ENCODE measurements at regions of chr20 and their contacts with region 1.

Region 1: GRCh38 chr20:2523919-2524708 is 12.3 kb upstream of the TMC2 start:
- DNase-seq: peak; percentile 38
- H3K4me3 ChIP-seq: peak overlapping the region; percentile 79
- H3K27ac ChIP-seq: peak overlapping the region; percentile 90
- H3K27me3 ChIP-seq: no peaks in the 10 kb centered on the region
- CTCF ChIP-seq: peak; percentile 95

Region 2: DNA sequence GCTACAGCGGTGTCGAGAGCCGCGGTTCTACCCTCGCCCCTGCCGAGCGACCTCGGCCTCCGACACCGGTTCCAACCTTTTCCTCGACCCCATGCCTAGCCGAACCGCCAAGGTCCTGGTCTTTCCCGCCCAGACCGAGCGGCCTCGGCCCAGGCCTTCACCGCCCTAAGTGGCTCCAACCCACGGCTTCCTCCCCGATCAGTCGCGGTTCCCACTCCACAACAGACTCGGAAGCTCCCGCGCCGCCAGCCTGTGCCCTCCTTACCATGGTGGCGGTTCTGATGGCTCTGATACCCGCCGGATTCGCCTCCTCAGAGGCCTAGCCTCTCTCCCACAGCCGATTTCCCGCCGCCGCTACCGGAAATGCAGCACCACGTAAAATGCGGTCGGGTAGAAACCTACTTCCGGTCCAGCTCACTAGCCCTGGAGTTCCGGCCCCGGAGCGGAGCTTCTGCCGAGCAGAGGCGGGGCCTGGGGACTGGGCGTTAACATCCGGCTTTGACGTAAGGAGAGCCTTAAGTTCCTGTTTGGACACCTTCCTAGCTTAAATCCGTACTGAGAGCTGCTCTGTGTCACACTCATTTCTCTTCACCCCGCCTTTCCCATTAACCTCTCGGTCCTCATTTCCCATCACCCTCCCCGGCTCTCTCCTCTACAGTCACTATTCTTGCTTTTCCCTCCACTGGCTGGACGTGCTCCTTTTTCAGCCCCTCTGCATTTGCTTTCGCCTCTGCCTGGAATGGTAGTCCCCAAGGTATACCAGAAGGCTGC is 53.5 kb before region 1 on chr20 and contains the start of gene SNRPB:
- CTCF ChIA-PET with region 1: interaction called, 22 read pairs
- POLR2A ChIA-PET with region 1: interaction called, 10 read pairs
- DNase-seq: peak; percentile 97
- H3K4me3 ChIP-seq: peak within 1 kb of the TSS; percentile 94
- H3K27ac ChIP-seq: peak within 1 kb of the TSS; percentile 96
- H3K27me3 ChIP-seq: no peaks in the 10 kb centered on the region
- CTCF ChIP-seq: no peak
- polyA plus RNA-seq, gene SNRPB: 137 and 142 TPM in 2 replicates

Region 3: DNA sequence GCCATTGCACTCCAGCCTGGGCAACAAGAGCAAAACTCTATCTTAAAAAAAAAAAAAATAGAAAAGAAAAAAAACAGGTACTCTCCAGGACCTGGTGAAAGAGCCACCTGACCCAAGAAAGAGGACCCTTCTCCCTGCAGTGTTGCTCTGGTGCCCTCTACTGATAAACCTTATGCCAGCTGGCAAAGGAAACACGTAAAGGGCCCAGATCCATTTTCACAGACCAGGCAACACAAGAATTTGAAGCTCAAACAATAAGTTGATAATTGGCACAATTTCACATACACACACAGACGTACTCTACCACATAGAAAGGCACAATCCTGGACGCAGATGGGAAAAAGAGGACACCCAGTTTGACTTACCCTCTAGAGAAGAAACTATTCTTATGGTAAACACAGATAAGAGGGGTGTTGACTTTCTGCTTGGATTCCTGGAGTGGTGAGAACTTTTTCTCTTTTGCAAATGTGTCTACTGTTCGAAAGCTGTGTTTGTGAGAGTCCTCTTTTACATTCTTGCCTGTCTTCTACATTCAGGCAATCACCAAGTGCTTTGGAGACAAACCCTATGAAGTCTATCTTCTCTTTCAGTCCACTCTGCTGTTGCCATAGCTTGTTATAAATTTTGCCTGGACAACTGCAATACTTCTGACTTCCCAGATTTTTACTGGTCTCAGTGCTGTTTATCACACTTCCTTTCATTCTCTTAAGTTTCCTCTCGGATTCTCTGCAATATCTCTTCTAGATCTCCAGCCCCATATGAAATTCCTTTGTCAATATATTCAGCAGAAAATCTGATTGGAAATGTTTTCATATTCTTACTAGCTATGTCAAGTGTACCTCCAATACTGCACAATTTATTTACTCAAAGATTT is 47.1 kb before region 1 on chr20:
- CTCF ChIA-PET with region 1: interaction called, 17 read pairs
- POLR2A ChIA-PET with region 1: interaction called, 10 read pairs
- DNase-seq: no peak
- H3K4me3 ChIP-seq: no peak overlapping the region
- H3K27ac ChIP-seq: no peak overlapping the region
- H3K27me3 ChIP-seq: no peaks in the 10 kb centered on the region
- CTCF ChIP-seq: 0 out of 2 replicates have a peak, but pooled peaks have one; percentile 10

Region 4: DNA sequence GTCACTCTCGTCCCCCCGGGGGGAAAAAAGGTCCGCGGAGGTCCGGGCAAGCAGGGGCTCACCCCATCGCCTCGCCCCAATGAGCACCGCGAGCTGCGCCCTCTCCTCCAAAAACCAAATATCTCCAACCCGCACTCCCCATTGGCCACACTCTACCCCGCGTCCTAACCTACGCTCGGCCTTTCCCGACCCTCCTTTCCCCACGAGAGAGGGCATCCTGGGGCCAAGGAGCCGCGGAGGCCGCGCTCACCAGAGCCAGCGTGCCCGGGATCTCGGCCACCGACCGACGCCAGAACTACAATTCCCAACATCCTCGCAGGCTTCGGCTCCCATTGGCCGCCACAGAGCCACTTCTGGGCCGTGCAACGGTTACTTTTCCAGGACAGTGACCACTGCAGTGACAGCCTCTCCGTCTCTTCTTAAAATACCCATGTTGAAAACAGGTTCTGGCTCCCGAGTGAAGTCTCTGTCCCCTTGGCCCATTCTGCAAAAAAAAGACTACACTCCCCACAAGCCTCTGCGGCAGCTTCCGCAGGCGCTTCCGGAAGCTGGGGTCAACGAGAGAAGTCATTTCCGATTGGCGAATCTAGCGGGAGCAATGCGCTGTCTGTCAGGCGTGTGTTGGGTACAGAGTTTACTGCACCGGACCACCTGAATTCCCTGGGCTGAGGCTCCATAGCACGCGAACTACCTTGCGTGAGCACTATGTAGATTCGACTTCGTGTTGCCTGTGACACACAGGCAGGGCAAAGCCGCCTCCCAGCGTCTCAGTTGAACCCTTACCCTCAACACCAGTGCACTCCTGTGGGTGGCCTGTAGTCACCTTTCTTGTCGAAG is 15.3 kb before region 1 on chr20 and contains the start of gene ZNF343:
- CTCF ChIA-PET with region 1: interaction called, 101 read pairs
- POLR2A ChIA-PET with region 1: interaction called, 3 read pairs
- DNase-seq: peak; percentile 48
- H3K4me3 ChIP-seq: peak within 1 kb of the TSS; percentile 85
- H3K27ac ChIP-seq: peak within 1 kb of the TSS; percentile 52
- H3K27me3 ChIP-seq: no peaks in the 10 kb centered on the region
- CTCF ChIP-seq: no peak
- polyA plus RNA-seq, gene ZNF343: 10.8 and 11.4 TPM in 2 replicates

Region 5: GRCh38 chr20:2619961-2620595 is 96.0 kb after region 1 on chr20:
- CTCF ChIA-PET with region 1: no interaction called
- POLR2A ChIA-PET with region 1: no interaction called
- DNase-seq: no peak
- H3K4me3 ChIP-seq: no peak overlapping the region
- H3K27ac ChIP-seq: no peak overlapping the region
- H3K27me3 ChIP-seq: peaks cover 15% of the 10 kb centered on the region
- CTCF ChIP-seq: no peak

Region 6: DNA sequence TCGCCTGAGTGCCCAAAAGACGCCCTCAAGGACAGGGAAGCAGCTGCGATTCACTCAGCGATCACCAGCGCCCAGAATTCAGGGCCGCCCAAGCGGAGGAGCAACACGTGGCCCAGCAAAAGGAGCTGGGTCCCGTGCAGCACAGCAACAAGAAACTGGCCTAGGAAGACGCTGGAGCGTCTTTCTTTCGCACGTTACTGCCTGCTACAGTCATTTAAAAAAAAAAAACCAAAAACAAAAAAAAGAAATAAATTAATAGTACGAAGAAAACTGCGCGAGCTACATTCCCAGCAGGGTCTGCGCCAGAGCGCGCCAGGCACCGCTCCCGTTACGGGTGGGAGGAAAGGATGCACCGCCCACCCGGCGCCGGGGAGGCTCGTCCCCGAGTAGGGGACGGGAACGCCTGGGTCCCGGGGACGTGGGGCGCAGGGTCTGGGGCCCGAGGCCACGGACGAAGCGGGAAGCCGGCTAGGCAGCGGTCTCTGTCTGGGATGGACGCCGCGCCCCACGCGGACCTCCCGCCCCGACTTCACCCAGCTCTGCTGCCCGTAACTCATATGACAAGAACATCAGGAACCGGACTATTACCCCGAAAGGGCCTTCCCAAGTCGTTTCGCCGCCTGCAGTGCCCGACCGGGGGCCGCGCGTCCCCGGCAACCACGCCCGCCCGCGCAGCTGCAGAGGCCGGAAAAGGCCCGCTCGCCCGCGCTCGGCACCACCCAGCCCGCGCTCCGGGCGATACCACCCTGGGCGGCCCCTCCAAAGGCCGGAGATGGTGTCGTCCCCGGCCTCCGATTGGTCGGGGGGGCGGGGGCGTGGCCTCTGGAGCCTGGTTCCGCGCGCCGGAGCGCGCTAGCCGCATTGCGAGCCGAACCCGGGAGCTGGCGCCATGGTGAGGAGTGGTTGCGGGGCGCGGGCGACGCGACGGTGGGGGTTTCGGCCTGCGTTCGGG is 127.9 kb after region 1 on chr20 and contains the start of gene NOP56:
- CTCF ChIA-PET with region 1: interaction called, 81 read pairs
- POLR2A ChIA-PET with region 1: interaction called, 15 read pairs
- DNase-seq: peak; percentile 68
- H3K4me3 ChIP-seq: peak within 1 kb of the TSS; percentile 99
- H3K27ac ChIP-seq: peak within 1 kb of the TSS; percentile 78
- H3K27me3 ChIP-seq: no peaks in the 10 kb centered on the region
- CTCF ChIP-seq: no peak
- polyA plus RNA-seq, gene NOP56: 126 and 142 TPM in 2 replicates